Caco-2 (cell line): ENCODE measurements at regions of chrX and their contacts with region 1.

Region 1: DNA sequence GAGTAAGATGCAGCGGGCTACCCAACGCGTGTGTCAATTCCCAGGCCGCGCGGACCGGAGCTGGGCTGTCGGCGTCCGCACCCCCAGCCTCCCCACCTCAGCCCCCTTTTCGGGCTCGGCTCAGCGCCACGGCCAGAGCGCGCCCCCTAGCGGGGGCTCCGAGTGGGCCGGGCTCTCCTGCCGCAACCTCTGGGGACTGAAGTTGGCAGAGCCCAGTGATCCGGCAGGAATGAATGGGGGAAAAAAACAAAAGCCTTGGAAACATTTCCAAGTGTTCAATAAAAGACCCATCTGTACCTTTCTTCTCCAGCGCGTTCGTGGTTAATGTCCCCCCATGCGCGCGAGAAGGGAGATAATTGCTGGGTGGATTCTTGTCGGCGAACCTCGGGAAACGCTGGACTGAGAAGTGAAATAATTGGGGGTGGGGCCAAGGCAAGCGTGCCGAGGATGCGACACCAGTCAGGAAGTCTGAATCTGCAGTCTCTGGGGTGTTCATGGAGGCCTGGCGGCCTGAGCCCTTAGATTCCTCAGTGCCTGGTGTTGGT is 5.2 kb upstream of the ARX start:
- DNase-seq: peak in 1 of 2 experiments; percentile 66
- H3K4me3 ChIP-seq: peak overlapping the region; percentile 35
- H3K4me3 Mint-ChIP-seq: peak overlapping the region; percentile 69
- H3K27ac Mint-ChIP-seq: no peak overlapping the region
- H3K4me1 ChIP-seq: no peaks in the 10 kb centered on the region
- H3K4me1 Mint-ChIP-seq: no peaks in the 10 kb centered on the region
- H3K27me3 ChIP-seq: no peaks in the 10 kb centered on the region; the same call in 1 of the 2 replicates
- H3K27me3 Mint-ChIP-seq: peaks cover 34% of the 10 kb centered on the region
- CTCF ChIP-seq: peak; percentile 60 to 79

Region 2: GRCh38 chrX:24748202-24748843 is 272.7 kb before region 1 on chrX:
- CTCF ChIA-PET with region 1: no interaction called
- POLR2A ChIA-PET with region 1: no interaction called
- intact Hi-C with region 1: loop called (anchors 1 kb)
- DNase-seq: no peak
- H3K4me3 ChIP-seq: no peak overlapping the region
- H3K4me3 Mint-ChIP-seq: no peak overlapping the region
- H3K27ac Mint-ChIP-seq: no peak overlapping the region
- H3K4me1 ChIP-seq: no peaks in the 10 kb centered on the region
- H3K4me1 Mint-ChIP-seq: no peaks in the 10 kb centered on the region
- H3K27me3 ChIP-seq: no peaks in the 10 kb centered on the region
- H3K27me3 Mint-ChIP-seq: no peaks in the 10 kb centered on the region
- CTCF ChIP-seq: no peak

Region 3: DNA sequence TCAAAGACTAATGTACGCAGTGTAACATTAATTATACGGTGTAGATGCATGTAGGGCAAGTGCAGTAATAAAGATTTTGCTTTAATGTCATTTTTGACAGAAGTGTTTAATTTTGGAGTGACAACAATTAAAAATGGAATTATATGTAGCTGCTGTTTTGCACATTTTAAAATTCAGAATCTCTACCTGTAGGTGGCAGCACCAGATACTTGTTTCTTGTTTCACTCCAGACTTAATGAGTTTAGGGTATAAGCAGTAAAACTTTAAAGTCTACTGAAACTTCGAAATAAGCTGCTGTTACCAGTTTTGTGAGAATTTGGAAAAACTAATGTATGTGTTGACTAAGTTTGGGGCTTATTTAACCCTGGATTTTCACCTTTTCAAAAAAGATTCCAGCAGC is 182.3 kb before region 1 on chrX:
- CTCF ChIA-PET with region 1: interaction called, 11 read pairs
- POLR2A ChIA-PET with region 1: no interaction called
- intact Hi-C with region 1: loop called (anchors 1 kb)
- DNase-seq: peak in 1 of 2 experiments; percentile 21
- H3K4me3 ChIP-seq: no peak overlapping the region
- H3K4me3 Mint-ChIP-seq: no peak overlapping the region
- H3K27ac Mint-ChIP-seq: no peak overlapping the region
- H3K4me1 ChIP-seq: no peaks in the 10 kb centered on the region
- H3K4me1 Mint-ChIP-seq: no peaks in the 10 kb centered on the region
- H3K27me3 ChIP-seq: no peaks in the 10 kb centered on the region
- H3K27me3 Mint-ChIP-seq: no peaks in the 10 kb centered on the region
- CTCF ChIP-seq: peak; percentile 21 to 42

Region 4: GRCh38 chrX:25523574-25524540 is 502.9 kb after region 1 on chrX:
- CTCF ChIA-PET with region 1: no interaction called
- POLR2A ChIA-PET with region 1: no interaction called
- intact Hi-C with region 1: no loop called
- DNase-seq: peak; percentile 45 to 47
- H3K4me3 ChIP-seq: no peak overlapping the region
- H3K4me3 Mint-ChIP-seq: peak overlapping the region; percentile 24
- H3K27ac Mint-ChIP-seq: no peak overlapping the region
- H3K4me1 ChIP-seq: 0 out of 2 replicates have a peak, but pooled peaks cover 4% of the 10 kb centered on the region
- H3K4me1 Mint-ChIP-seq: no peaks in the 10 kb centered on the region
- H3K27me3 ChIP-seq: no peaks in the 10 kb centered on the region
- H3K27me3 Mint-ChIP-seq: peaks cover 2% of the 10 kb centered on the region
- CTCF ChIP-seq: peak in 1 of 2 experiments; percentile 48